GM12878 (cell line): ENCODE measurements at regions of chr13 and their contacts with region 1.

Region 1: GRCh38 chr13:103130681-103131210 is 64.5 kb upstream of the SLC10A2 start:
- DNase-seq: peak; percentile 71
- ATAC-seq: peak; percentile 89
- H3K4me3 ChIP-seq: 0 out of 2 replicates have a peak overlapping the region, but pooled peaks have one; percentile 6
- H3K27ac ChIP-seq: peak overlapping the region; percentile 55
- H3K4me1 ChIP-seq: peaks cover 17% of the 10 kb centered on the region
- H3K27me3 ChIP-seq: no peaks in the 10 kb centered on the region
- CTCF ChIP-seq: no peak
- EP300 ChIP-seq: peak; percentile 66 to 78; a peak in 1 of 4 replicates
- POLR2A ChIP-seq: no peak
- RAD21 ChIP-seq: no peak

Region 2: GRCh38 chr13:102800145-102801041 is 330.4 kb before region 1 on chr13:
- CTCF ChIA-PET with region 1: no interaction called
- POLR2A ChIA-PET with region 1: no interaction called
- RAD21 ChIA-PET with region 1: no interaction called
- SMC1A ChIA-PET with region 1: no interaction called
- in situ Hi-C with region 1: no loop called
- intact Hi-C with region 1: no loop called
- DNase-seq: no peak
- ATAC-seq: peak; percentile 87
- H3K4me3 ChIP-seq: peak overlapping the region; percentile 77
- H3K27ac ChIP-seq: peak overlapping the region; percentile 72
- H3K4me1 ChIP-seq: peaks cover 5% of the 10 kb centered on the region; the same call in 1 of the 2 replicates
- H3K27me3 ChIP-seq: no peaks in the 10 kb centered on the region
- CTCF ChIP-seq: peak; percentile 76 to 91 (median 83)
- EP300 ChIP-seq: no peak
- POLR2A ChIP-seq: peak; percentile 85
- RAD21 ChIP-seq: peak; percentile 61

Region 3: DNA sequence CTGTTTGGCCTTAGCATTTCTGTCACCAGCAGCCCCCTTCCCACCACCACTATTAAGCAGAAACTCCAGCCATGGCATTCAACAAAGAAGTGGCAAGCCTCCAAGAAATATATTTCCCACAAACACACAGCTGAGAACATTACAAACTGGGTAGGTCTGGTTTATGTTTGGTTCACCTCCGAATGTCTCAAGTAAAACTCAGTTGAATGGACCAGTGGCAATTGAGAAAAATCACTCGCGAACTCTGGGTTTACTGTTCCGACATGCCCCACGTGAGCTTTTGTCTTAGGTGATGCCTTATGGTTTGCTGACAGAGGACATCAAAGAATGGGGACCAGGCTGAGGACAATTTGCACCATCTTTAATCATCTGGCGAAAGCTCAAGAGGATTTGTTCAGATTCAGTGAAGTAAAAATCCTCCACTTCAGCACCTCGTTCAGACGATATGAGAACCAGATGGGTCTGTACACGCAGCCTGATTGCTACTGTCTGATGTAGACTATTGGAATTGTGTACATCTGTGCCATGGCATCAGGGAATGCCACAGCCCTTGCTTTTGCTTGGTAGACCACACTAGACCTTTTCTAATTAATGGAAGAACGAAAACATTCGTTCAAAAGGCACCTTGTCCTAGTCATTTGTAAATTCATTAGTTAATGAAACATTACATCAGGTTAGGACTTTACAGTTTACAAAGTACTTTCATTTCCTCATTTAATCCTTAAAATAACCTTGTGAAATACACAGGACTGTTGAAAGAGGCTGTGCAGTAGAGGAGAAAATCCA is 123.9 kb before region 1 on chr13:
- CTCF ChIA-PET with region 1: interaction called, 5 read pairs
- POLR2A ChIA-PET with region 1: no interaction called
- RAD21 ChIA-PET with region 1: interaction called, 9 read pairs
- SMC1A ChIA-PET with region 1: interaction called, 10 read pairs
- in situ Hi-C with region 1: no loop called
- intact Hi-C with region 1: loop called (anchors 2 kb)
- DNase-seq: peak; percentile 74
- ATAC-seq: peak; percentile 95
- H3K4me3 ChIP-seq: no peak overlapping the region; the same call in 1 of the 2 replicates
- H3K27ac ChIP-seq: peak overlapping the region; percentile 87
- H3K4me1 ChIP-seq: peaks cover 15% of the 10 kb centered on the region
- H3K27me3 ChIP-seq: no peaks in the 10 kb centered on the region
- CTCF ChIP-seq: no peak
- EP300 ChIP-seq: peak; percentile 90 to 98
- POLR2A ChIP-seq: no peak
- RAD21 ChIP-seq: 0 out of 2 replicates have a peak, but pooled peaks have one; percentile 3

Region 4: DNA sequence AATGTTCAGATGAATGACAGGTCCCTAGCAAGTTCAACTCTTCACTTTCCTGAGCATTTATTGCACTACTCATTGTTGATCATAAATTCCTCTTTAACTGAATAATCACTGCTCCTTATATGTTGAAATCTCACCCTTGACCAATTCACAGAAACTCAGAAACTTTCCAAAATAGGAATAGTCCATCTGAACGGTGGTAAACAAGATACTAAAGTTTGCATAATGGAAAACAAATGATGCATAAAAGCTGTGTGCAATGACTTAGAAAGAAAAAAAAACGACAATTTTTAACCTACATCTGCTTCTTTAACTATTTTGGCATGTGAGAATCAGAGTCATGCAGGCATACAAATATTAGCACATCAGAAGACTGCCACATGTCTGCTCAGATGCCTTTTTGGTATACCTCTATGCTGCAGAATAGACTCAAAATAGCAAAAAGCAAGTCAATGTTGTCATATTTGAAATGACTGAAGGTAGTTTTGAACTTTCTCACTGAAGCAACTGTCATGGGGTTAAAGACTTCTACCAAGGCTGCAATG is 99.3 kb before region 1 on chr13:
- CTCF ChIA-PET with region 1: no interaction called
- POLR2A ChIA-PET with region 1: interaction called, 4 read pairs
- RAD21 ChIA-PET with region 1: interaction called, 21 read pairs
- SMC1A ChIA-PET with region 1: interaction called, 31 read pairs
- in situ Hi-C with region 1: loop called (anchors 5 kb)
- intact Hi-C with region 1: loop called (anchors 1 kb)
- DNase-seq: peak; percentile 90
- ATAC-seq: peak; percentile 93
- H3K4me3 ChIP-seq: no peak overlapping the region
- H3K27ac ChIP-seq: peak overlapping the region; percentile 79
- H3K4me1 ChIP-seq: peaks cover 38% of the 10 kb centered on the region
- H3K27me3 ChIP-seq: no peaks in the 10 kb centered on the region
- CTCF ChIP-seq: no peak
- EP300 ChIP-seq: peak; percentile 95 to 99
- POLR2A ChIP-seq: no peak
- RAD21 ChIP-seq: peak; percentile 19

Region 5: DNA sequence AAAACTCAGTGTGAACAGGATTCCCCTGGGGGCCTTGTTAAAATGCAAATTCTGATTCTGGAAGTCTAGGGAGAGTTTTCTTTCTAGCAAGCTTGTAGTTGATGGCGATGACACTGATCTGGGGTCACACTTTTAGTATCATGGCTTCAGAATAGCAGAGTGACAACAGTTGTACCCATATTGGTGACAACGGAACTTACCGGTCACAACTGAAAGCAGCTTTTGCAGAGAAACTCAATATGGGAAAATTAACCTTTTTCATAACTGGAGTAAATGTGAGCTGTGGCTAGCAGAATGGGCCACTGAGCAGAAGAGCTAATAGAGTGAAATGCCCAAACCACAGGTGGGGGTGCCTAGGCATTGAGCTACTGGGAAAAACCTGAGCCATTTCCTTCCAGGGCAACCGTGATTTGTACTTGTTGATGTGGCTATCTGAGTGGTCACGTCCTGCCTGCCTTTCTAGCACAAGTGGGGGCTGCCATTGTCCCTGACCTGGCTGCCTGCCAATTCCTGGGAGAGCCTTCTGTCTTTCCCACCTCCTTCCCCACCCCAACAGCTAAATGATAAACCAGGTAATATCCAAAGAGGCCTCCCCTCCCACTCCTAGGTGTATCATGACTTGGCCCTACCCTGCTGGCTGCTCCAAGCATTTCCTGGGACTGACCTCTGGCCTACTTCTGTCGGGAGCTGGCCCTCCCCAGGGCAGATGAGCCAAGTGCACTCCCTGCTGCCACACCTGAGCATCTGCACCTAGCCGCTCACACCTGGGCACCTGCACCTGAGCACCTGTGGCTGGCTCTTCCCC is 62.8 kb before region 1 on chr13:
- CTCF ChIA-PET with region 1: interaction called, 3 read pairs
- POLR2A ChIA-PET with region 1: no interaction called
- RAD21 ChIA-PET with region 1: interaction called, 6 read pairs
- SMC1A ChIA-PET with region 1: interaction called, 9 read pairs
- in situ Hi-C with region 1: no loop called
- intact Hi-C with region 1: loop called (anchors 5 kb)
- DNase-seq: peak; percentile 72
- ATAC-seq: peak; percentile 86
- H3K4me3 ChIP-seq: no peak overlapping the region
- H3K27ac ChIP-seq: peak overlapping the region; percentile 13
- H3K4me1 ChIP-seq: peaks cover 11% of the 10 kb centered on the region
- H3K27me3 ChIP-seq: no peaks in the 10 kb centered on the region
- CTCF ChIP-seq: no peak
- EP300 ChIP-seq: no peak; a peak in 1 of 4 replicates
- POLR2A ChIP-seq: no peak
- RAD21 ChIP-seq: peak; percentile 17; the same call in 1 of the 2 replicates

Region 6: GRCh38 chr13:103145442-103145841 is 14.7 kb after region 1 on chr13:
- CTCF ChIA-PET with region 1: interaction called, 21 read pairs
- POLR2A ChIA-PET with region 1: interaction called, 5 read pairs
- RAD21 ChIA-PET with region 1: interaction called, 8 read pairs
- SMC1A ChIA-PET with region 1: interaction called, 33 read pairs
- in situ Hi-C with region 1: no loop called
- intact Hi-C with region 1: no loop called
- DNase-seq: no peak
- ATAC-seq: no peak
- H3K4me3 ChIP-seq: no peak overlapping the region
- H3K27ac ChIP-seq: no peak overlapping the region
- H3K4me1 ChIP-seq: no peaks in the 10 kb centered on the region
- H3K27me3 ChIP-seq: no peaks in the 10 kb centered on the region
- CTCF ChIP-seq: no peak
- EP300 ChIP-seq: no peak
- POLR2A ChIP-seq: no peak
- RAD21 ChIP-seq: no peak

Region 7: DNA sequence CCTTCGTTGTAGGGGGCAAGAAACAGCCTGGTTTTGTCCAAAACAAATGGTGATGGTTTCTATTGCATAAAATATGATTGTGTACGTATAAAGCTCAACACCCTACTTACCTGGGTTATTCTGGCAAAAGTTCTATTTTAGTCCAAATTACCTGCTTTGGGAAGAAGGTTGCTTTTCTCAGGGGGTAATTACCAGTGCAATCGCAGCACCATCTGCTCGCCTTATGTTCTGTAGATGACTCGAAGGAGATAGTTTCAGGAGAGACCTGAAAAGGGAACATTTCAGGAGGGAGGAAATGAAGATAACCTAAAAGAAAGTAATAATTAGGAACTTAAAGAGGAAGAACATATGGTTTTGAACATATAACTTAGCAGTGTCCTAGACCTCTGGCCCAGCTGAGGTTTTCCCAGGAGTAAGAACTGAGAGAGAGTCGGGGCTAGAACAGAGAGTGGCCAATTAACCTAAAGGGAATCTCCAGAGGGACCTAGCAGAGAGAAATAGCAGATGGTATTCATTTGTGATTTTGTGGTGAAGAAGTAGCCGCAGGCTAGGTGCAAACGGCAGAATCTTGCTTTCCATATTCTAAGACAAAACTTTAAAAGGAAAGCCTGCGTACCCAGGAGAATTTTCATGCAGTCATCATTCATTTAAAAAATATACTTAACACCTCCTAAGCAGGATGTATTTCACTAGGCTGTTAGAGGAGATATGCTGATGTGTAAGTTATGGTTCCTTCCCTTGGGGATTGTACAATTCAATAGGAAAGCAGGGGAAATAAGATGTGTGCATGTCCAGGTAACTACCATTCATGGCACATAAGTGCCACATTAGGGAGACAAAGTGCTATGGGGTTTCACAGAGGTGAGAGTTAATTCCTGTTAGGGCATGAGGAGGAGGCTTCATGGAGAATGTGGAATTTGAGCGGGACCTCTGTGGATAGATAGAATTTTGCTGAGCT is 48.5 kb after region 1 on chr13:
- CTCF ChIA-PET with region 1: interaction called, 3 read pairs
- POLR2A ChIA-PET with region 1: interaction called, 4 read pairs
- RAD21 ChIA-PET with region 1: interaction called, 8 read pairs
- SMC1A ChIA-PET with region 1: interaction called, 8 read pairs
- in situ Hi-C with region 1: no loop called
- intact Hi-C with region 1: loop called (anchors 2 kb)
- DNase-seq: peak; percentile 46
- ATAC-seq: peak; percentile 87
- H3K4me3 ChIP-seq: no peak overlapping the region
- H3K27ac ChIP-seq: no peak overlapping the region
- H3K4me1 ChIP-seq: peaks cover 10% of the 10 kb centered on the region
- H3K27me3 ChIP-seq: no peaks in the 10 kb centered on the region
- CTCF ChIP-seq: no peak
- EP300 ChIP-seq: peak in 1 of 2 experiments; percentile 60; a peak in 3 of 4 replicates
- POLR2A ChIP-seq: no peak
- RAD21 ChIP-seq: no peak

Region 8: GRCh38 chr13:103466761-103467160 is 336.0 kb after region 1 on chr13:
- CTCF ChIA-PET with region 1: no interaction called
- POLR2A ChIA-PET with region 1: no interaction called
- RAD21 ChIA-PET with region 1: no interaction called
- SMC1A ChIA-PET with region 1: no interaction called
- in situ Hi-C with region 1: no loop called
- intact Hi-C with region 1: no loop called
- DNase-seq: no peak
- ATAC-seq: no peak
- H3K4me3 ChIP-seq: no peak overlapping the region
- H3K27ac ChIP-seq: no peak overlapping the region
- H3K4me1 ChIP-seq: no peaks in the 10 kb centered on the region
- H3K27me3 ChIP-seq: no peaks in the 10 kb centered on the region
- CTCF ChIP-seq: no peak
- EP300 ChIP-seq: no peak
- POLR2A ChIP-seq: no peak
- RAD21 ChIP-seq: no peak